IMR-90 (cell line): ENCODE measurements at regions of chrX and their contacts with region 1.

Region 1: DNA sequence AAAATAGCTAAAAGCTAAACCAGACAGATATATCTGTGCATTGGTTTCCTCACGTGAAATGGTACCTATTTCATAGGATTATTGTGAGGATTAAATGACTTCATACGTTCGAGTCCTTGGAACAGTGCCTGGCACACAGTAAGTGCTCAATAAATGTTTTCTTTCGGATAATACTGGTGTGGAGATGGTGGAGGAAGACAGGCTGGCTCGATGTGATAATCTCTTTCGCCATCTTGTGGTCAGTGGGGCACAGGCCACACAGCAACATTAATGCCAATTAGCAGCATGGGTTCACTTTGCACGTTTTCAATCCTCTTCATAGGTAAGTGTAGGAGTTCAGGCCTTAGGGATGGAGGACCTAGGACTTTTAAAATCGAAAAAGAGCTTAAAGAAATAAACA is 9.3 kb downstream of the PAGE4 start:
- DNase-seq: peak; percentile 15
- ATAC-seq: peak; percentile 62
- H3K4me3 ChIP-seq: no peak overlapping the region
- H3K27ac ChIP-seq: no peak overlapping the region
- H3K4me1 ChIP-seq: no peaks in the 10 kb centered on the region
- H3K27me3 ChIP-seq: peaks cover 5% of the 10 kb centered on the region
- CTCF ChIP-seq: peak; percentile 56
- POLR2A ChIP-seq: no peak
- RAD21 ChIP-seq: peak; percentile 46; the same call in 1 of the 2 replicates

Region 2: GRCh38 chrX:49761481-49761880 is 76.9 kb before region 1 on chrX:
- CTCF ChIA-PET with region 1: no interaction called
- POLR2A ChIA-PET with region 1: no interaction called
- dilution Hi-C with region 1: no loop called
- in situ Hi-C with region 1: no loop called
- intact Hi-C with region 1: loop called (anchors 5 kb)
- DNase-seq: peak; percentile 12
- ATAC-seq: no peak
- H3K4me3 ChIP-seq: no peak overlapping the region
- H3K27ac ChIP-seq: no peak overlapping the region
- H3K4me1 ChIP-seq: no peaks in the 10 kb centered on the region
- H3K27me3 ChIP-seq: peaks cover 2% of the 10 kb centered on the region; the same call in 1 of the 2 replicates
- CTCF ChIP-seq: peak; percentile 46
- POLR2A ChIP-seq: no peak
- RAD21 ChIP-seq: peak; percentile 30; the same call in 1 of the 2 replicates

Region 3: GRCh38 chrX:50100188-50100587 is 261.8 kb after region 1 on chrX:
- CTCF ChIA-PET with region 1: no interaction called
- POLR2A ChIA-PET with region 1: no interaction called
- dilution Hi-C with region 1: no loop called
- in situ Hi-C with region 1: no loop called
- intact Hi-C with region 1: no loop called
- DNase-seq: no peak
- ATAC-seq: no peak
- H3K4me3 ChIP-seq: no peak overlapping the region
- H3K27ac ChIP-seq: no peak overlapping the region
- H3K4me1 ChIP-seq: no peaks in the 10 kb centered on the region
- H3K27me3 ChIP-seq: peaks cover 7% of the 10 kb centered on the region
- CTCF ChIP-seq: peak; percentile 8; the same call in 1 of the 2 replicates
- POLR2A ChIP-seq: no peak
- RAD21 ChIP-seq: no peak